CD4-positive, alpha-beta T cell (primary cell): ENCODE measurements at regions of chr21 and their contacts with region 1.

Region 1: GRCh38 chr21:34073032-34073869 is at the starts of genes MRPS6 and SLC5A3:
- DNase-seq: peak; percentile 40 to 91 (median 64)
- ATAC-seq: peak; percentile 66
- H3K4me3 ChIP-seq: peak within 1 kb of the TSS; percentile 74
- H3K4me3 Mint-ChIP-seq: peak within 1 kb of the TSS; percentile 95
- H3K27ac ChIP-seq: peak within 1 kb of the TSS; percentile 56 to 70
- H3K27ac Mint-ChIP-seq: peak within 1 kb of the TSS; percentile 88
- H3K4me1 ChIP-seq: peaks cover 34% of the 10 kb centered on the region
- H3K4me1 Mint-ChIP-seq: peaks cover 50% of the 10 kb centered on the region
- H3K27me3 ChIP-seq: no peaks in the 10 kb centered on the region
- H3K27me3 Mint-ChIP-seq: no peaks in the 10 kb centered on the region
- CTCF ChIP-seq: no peak
- total RNA-seq, gene MRPS6: 13.5 to 14.4 TPM
- total RNA-seq, gene SLC5A3: 4.6 to 4.9 TPM

Region 2: DNA sequence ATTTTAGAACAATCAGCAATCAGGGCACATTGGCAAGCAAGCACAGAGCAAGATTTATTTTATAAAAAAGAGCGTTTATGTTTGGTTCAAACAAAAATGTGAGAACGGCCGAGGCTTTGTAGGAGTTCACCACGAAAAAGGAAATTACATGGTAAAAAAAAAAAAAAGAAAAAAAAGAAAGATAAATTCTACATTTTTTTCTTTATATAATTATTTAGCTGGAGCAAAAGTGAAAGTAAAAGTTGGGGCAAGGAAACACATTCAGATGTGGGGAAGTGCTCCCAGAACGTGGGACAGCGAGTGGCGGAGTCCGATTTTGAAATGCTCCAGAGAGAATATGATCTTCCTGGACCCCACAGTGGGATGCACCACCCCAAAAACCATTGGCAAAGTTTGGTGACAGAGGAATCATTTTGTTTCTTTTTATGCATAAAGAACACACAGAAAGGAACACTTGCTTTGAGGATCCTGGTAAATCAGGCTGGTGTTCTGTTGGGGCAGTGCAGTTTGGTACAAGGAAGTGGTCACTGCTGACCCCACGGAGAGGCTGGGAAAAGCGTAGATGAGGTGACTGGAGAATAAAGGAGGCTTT is 141.4 kb before region 1 on chr21:
- CTCF ChIA-PET with region 1: no interaction called
- POLR2A ChIA-PET with region 1: interaction called, 40 read pairs
- intact Hi-C with region 1: no loop called
- DNase-seq: peak in 4 of 14 experiments; percentile 18 to 72 (median 49)
- ATAC-seq: peak; percentile 24
- H3K4me3 ChIP-seq: peak overlapping the region; percentile 71
- H3K4me3 Mint-ChIP-seq: peak overlapping the region; percentile 94
- H3K27ac ChIP-seq: peak overlapping the region; percentile 88 to 95
- H3K27ac Mint-ChIP-seq: peak overlapping the region; percentile 98
- H3K4me1 ChIP-seq: peaks cover 43% of the 10 kb centered on the region
- H3K4me1 Mint-ChIP-seq: peaks cover 59% of the 10 kb centered on the region
- H3K27me3 ChIP-seq: no peaks in the 10 kb centered on the region
- H3K27me3 Mint-ChIP-seq: no peaks in the 10 kb centered on the region
- CTCF ChIP-seq: no peak

Region 3: DNA sequence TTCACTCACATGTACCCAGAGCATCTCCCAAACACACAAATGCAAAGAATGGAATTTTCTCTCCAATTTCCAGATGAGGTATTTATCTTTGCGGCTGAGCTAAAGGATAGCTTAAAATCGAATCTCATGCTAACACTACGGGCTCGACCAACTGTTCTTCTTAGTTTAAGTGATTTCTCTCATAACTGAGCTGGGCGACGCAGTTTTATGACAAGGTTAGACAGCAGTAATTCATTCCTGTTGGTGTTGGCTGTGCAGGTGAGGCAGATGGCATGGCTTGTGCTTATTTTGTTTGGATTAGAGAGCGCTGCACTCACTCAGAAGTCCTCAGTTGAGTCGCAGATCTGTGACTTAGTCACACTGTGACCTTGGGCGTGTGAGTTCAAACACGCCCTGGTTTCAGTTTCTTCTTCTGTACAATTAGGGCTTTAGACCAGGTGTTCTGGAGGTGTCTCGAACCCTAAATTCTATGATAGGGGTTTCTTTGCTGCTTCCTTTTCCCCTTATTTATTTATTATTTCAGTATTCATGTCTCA is 41.3 kb before region 1 on chr21:
- CTCF ChIA-PET with region 1: no interaction called
- POLR2A ChIA-PET with region 1: no interaction called
- intact Hi-C with region 1: loop called in 1 of 2 experiments (anchors 2 kb)
- DNase-seq: no peak
- ATAC-seq: no peak
- H3K4me3 ChIP-seq: no peak overlapping the region
- H3K4me3 Mint-ChIP-seq: no peak overlapping the region
- H3K27ac ChIP-seq: no peak overlapping the region
- H3K27ac Mint-ChIP-seq: no peak overlapping the region
- H3K4me1 ChIP-seq: peaks cover 4% of the 10 kb centered on the region
- H3K4me1 Mint-ChIP-seq: no peaks in the 10 kb centered on the region
- H3K27me3 ChIP-seq: no peaks in the 10 kb centered on the region
- H3K27me3 Mint-ChIP-seq: no peaks in the 10 kb centered on the region
- CTCF ChIP-seq: no peak

Region 4: GRCh38 chr21:34129039-34129891 is 56.0 kb after region 1 on chr21:
- CTCF ChIA-PET with region 1: interaction called, 3 read pairs
- POLR2A ChIA-PET with region 1: interaction called, 10 read pairs
- intact Hi-C with region 1: loop called (anchors 2 to 5 kb)
- DNase-seq: peak; percentile 31 to 86 (median 56)
- ATAC-seq: peak; percentile 89
- H3K4me3 ChIP-seq: peak overlapping the region; percentile 9
- H3K4me3 Mint-ChIP-seq: peak overlapping the region; percentile 71
- H3K27ac ChIP-seq: peak overlapping the region; percentile 31 to 54
- H3K27ac Mint-ChIP-seq: peak overlapping the region; percentile 91
- H3K4me1 ChIP-seq: peaks cover 62% of the 10 kb centered on the region
- H3K4me1 Mint-ChIP-seq: peaks cover 94% of the 10 kb centered on the region
- H3K27me3 ChIP-seq: no peaks in the 10 kb centered on the region
- H3K27me3 Mint-ChIP-seq: no peaks in the 10 kb centered on the region
- CTCF ChIP-seq: peak; percentile 40

Region 5: DNA sequence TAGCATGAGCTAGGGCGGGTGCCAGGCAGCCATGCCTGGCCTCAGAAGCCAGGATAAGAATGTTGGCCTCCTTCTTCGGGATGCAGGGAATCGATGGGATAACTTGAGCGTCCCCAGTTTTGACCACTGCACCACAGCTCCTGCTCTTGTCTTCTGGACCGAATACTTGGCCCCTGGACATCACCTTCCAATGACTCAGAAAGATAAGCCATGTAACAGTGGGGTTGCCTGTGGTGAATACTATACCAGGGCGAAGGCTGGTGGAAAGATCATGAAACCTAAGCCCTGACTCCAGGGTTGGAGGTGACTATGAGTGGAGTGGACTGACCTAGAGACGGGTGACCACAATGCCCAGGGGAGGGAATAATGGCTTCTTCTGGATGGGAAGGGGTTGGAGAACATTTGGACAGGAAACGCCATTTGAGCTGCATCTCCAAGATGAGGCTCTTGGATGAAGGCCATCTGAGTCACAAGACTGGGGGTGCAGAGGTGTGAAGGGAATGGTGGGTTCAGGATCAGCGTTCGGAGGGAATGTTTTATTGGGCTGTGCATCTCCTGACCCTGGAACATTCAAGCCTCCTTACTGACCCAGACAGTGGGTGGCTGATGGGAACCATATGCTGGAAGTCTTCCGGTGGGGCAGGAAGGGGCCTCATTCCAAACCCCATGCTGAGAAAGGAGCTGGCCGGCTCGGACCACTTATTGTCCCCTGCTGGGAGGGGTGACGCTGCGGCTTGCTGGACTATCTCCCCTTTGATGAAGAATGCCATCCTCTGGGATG is 272.0 kb after region 1 on chr21:
- CTCF ChIA-PET with region 1: interaction called, 9 read pairs
- POLR2A ChIA-PET with region 1: interaction called, 3 read pairs
- intact Hi-C with region 1: loop called (anchors 1 to 5 kb)
- DNase-seq: no peak
- ATAC-seq: no peak
- H3K4me3 ChIP-seq: no peak overlapping the region
- H3K4me3 Mint-ChIP-seq: no peak overlapping the region
- H3K27ac ChIP-seq: no peak overlapping the region
- H3K27ac Mint-ChIP-seq: no peak overlapping the region
- H3K4me1 ChIP-seq: peaks cover 4% of the 10 kb centered on the region
- H3K4me1 Mint-ChIP-seq: peaks cover 4% of the 10 kb centered on the region
- H3K27me3 ChIP-seq: peaks cover 0 to 2% of the 10 kb centered on the region in 2 experiments
- H3K27me3 Mint-ChIP-seq: no peaks in the 10 kb centered on the region
- CTCF ChIP-seq: no peak

Region 6: DNA sequence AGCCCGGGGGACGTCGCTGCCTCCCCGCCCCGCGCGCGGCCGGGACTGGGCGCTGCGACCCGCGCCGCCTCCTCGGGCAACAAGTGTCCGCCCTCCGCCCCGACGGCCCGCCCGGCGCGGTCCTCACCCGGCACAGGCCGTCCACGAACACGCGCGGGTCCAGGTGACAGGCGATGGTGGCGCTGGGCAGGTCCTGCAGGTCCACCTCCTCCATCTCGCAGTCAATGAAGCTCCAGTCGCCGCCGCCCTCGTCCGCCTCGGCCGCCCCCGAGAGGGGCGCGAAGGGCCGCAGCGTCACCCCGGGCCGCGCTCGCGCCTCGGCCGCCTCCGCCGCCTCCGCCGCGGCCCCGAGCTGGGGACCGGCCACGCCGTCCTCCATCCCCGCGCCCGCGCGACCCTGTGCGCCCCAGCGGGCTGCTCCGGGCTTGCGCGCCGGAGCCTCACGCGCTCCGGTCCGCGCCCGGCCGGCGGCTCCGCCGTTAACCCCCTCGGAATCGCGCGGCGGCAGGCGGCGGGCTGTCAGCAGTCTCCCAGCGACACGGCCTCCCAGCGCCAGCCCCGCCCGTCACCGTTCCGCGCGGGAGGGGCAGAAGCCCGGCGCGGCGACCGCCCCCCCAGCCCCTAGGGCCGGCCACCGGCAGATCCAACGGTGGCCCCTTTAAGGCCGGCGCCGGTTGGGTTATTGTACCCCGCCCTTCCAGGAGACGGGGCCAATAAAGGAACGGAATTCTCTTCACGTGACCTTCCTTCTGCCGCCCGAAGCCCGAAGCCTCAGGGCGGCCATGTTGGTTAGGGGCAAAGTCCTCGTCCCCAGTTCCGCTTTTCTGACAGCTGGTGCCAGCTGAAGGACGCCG is 541.6 kb after region 1 on chr21 and contains the start of gene RCAN1:
- CTCF ChIA-PET with region 1: no interaction called
- POLR2A ChIA-PET with region 1: no interaction called
- intact Hi-C with region 1: loop called in 1 of 2 experiments (anchors 5 kb)
- DNase-seq: peak; percentile 70 to 94 (median 79)
- ATAC-seq: peak; percentile 97
- H3K4me3 ChIP-seq: peak within 1 kb of the TSS; percentile 67
- H3K4me3 Mint-ChIP-seq: peak within 1 kb of the TSS; percentile 95
- H3K27ac ChIP-seq: peak within 1 kb of the TSS; percentile 55 to 61
- H3K27ac Mint-ChIP-seq: peak within 1 kb of the TSS; percentile 87
- H3K4me1 ChIP-seq: peaks cover 12% of the 10 kb centered on the region
- H3K4me1 Mint-ChIP-seq: peaks cover 30% of the 10 kb centered on the region
- H3K27me3 ChIP-seq: no peaks in the 10 kb centered on the region
- H3K27me3 Mint-ChIP-seq: no peaks in the 10 kb centered on the region
- CTCF ChIP-seq: no peak
- total RNA-seq, gene RCAN1: 1.1 to 1.5 TPM

Region 7: GRCh38 chr21:34642211-34643075 is 569.2 kb after region 1 on chr21:
- CTCF ChIA-PET with region 1: no interaction called
- POLR2A ChIA-PET with region 1: no interaction called
- intact Hi-C with region 1: no loop called
- DNase-seq: no peak
- ATAC-seq: no peak
- H3K4me3 ChIP-seq: no peak overlapping the region
- H3K4me3 Mint-ChIP-seq: no peak overlapping the region
- H3K27ac ChIP-seq: no peak overlapping the region
- H3K27ac Mint-ChIP-seq: no peak overlapping the region
- H3K4me1 ChIP-seq: peaks cover 10% of the 10 kb centered on the region
- H3K4me1 Mint-ChIP-seq: peaks cover 23% of the 10 kb centered on the region
- H3K27me3 ChIP-seq: no peaks in the 10 kb centered on the region
- H3K27me3 Mint-ChIP-seq: peaks cover 3% of the 10 kb centered on the region
- CTCF ChIP-seq: no peak